Endothelial cell of umbilical vein (primary cell): ENCODE measurements at regions of chr1 and their contacts with region 1.

Region 1: DNA sequence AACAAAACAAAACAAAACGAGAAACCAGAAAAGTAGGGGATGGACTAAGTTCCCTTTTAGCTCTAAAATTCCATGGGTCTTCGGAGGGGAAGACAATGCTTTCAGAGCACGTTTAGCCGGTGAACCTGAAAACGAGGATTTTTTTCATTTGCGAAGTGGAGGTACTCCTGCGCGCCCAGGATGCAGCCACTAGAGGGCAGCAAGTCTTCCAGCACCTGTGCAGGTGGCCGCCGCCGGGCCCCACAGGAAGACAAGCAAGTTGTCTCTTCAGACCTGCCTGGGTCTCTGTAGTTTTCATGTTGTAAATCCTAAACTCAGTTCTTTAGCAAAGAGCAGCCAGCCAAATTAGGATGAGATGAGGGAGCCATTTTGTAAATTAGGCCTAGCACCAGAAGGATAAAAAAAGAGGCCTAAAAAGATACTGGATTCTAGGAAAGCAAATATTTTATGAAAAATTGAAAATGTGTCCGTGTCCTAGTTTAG is 17.7 kb upstream of the SNX27 start:
- DNase-seq: peak; percentile 51
- H3K4me3 ChIP-seq: no peak overlapping the region
- H3K27ac ChIP-seq: no peak overlapping the region
- H3K4me1 ChIP-seq: no peaks in the 10 kb centered on the region
- H3K27me3 ChIP-seq: no peaks in the 10 kb centered on the region
- CTCF ChIP-seq: peak; percentile 94 to 95
- POLR2A ChIP-seq: no peak

Region 2: DNA sequence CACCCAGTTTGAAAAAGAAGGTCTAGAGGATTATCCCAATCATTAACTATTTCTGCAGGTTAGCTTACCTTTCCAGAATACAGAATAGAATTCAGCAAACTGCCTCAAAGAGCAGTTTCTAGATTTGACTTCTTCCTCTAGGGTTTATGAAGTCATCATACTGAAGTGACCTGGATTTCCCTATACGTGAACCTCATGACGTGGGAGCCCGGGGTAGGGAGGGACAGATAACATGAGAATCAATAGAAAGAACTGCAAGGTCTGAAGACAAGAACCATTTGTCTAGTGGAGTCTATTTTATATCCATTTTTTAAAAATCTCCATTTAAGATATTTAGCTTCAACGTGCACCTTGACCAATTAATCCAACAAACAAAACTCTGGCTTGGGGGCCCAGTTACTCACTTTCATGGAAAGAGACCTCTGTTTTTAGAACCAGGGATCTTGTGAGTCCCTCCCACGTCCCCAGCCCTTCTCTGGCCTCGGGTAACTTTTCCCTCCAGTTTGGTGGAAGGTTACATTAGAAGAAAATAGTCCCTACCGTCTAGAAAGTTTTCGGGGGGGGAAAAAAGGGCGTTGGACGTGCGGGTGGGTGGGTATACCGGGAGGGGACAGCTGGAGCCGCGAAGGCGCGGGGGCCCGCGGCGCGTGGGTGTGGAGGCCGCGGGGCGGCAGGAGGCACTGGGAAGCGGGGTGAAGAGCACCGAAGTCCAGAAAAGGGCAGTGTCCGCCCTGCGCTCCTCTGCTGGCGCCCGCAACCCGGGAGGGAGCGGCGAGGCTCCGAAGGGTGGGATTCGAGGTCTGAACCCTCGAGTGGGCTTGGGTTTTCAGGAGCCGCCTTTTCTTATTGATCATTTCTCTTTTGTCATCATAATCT is 121.1 kb before region 1 on chr1:
- CTCF ChIA-PET with region 1: no interaction called
- POLR2A ChIA-PET with region 1: interaction called, 3 read pairs
- dilution Hi-C with region 1: no loop called
- intact Hi-C with region 1: loop called (anchors 5 kb)
- DNase-seq: peak; percentile 52
- H3K4me3 ChIP-seq: peak overlapping the region; percentile 40 to 64 (median 41)
- H3K27ac ChIP-seq: no peak overlapping the region
- H3K4me1 ChIP-seq: peaks cover 2% of the 10 kb centered on the region
- H3K27me3 ChIP-seq: no peaks in the 10 kb centered on the region
- CTCF ChIP-seq: no peak
- POLR2A ChIP-seq: peak; percentile 39

Region 3: GRCh38 chr1:151485685-151486255 is 108.4 kb before region 1 on chr1:
- CTCF ChIA-PET with region 1: no interaction called
- POLR2A ChIA-PET with region 1: no interaction called
- dilution Hi-C with region 1: no loop called
- intact Hi-C with region 1: no loop called
- DNase-seq: no peak
- H3K4me3 ChIP-seq: no peak overlapping the region
- H3K27ac ChIP-seq: no peak overlapping the region
- H3K4me1 ChIP-seq: no peaks in the 10 kb centered on the region
- H3K27me3 ChIP-seq: no peaks in the 10 kb centered on the region
- CTCF ChIP-seq: no peak
- POLR2A ChIP-seq: no peak

Region 4: DNA sequence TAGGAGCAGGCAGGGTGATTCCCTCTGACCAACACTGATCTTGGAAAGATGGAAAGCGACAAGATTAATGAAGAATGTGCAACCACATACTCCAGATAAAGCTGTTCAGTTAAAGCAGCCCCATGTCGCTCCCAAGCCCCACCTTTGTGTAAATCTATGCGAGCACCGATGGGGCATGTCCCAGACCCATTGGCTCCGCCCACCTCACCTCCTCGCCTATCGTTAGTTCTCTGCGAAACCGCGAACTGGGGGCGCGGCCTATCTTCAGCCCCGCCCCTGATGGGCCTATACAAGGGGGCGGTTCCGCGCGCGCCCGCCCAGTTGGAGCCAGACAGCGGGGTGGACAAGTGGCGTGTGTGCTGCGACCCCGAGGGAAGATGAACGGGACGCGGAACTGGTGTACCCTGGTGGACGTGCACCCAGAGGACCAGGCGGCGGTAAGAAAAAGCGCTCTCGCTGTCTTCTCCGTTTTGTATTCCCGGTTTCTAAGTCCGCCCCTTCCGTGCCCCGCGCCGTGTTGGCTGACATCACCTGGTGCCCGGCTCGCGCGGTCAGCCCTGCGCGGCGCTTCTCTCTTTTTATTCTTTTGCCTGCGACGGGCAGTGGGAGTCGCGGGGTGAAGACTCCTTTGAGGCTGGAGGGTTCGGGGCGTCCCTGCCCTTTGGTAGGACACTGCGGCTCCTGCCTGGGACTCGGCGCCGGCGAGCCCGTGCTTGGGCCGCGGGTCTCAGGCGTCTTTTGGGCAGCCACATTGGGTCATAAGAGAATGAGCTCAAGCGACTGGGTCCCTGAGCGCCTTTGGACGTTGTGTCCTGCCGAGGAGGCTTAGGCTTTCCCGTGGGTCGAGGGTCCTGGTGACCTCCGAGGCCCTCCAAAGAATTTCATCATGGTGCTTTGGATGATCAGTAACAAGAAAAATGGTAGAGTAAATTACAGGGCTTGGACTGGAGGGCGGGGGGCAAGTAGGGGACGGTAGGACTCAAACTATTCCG is 53.9 kb before region 1 on chr1 and contains the start of gene TUFT1:
- CTCF ChIA-PET with region 1: interaction called, 3 read pairs
- POLR2A ChIA-PET with region 1: no interaction called
- dilution Hi-C with region 1: no loop called
- intact Hi-C with region 1: loop called (anchors 5 kb)
- DNase-seq: peak; percentile 92
- H3K4me3 ChIP-seq: peak within 1 kb of the TSS; percentile 76 to 81 (median 78)
- H3K27ac ChIP-seq: peak within 1 kb of the TSS; percentile 33
- H3K4me1 ChIP-seq: peaks cover 11% of the 10 kb centered on the region
- H3K27me3 ChIP-seq: no peaks in the 10 kb centered on the region
- CTCF ChIP-seq: no peak
- POLR2A ChIP-seq: peak; percentile 97
- total RNA-seq, gene TUFT1: 4.3 TPM in 2 replicates

Region 5: DNA sequence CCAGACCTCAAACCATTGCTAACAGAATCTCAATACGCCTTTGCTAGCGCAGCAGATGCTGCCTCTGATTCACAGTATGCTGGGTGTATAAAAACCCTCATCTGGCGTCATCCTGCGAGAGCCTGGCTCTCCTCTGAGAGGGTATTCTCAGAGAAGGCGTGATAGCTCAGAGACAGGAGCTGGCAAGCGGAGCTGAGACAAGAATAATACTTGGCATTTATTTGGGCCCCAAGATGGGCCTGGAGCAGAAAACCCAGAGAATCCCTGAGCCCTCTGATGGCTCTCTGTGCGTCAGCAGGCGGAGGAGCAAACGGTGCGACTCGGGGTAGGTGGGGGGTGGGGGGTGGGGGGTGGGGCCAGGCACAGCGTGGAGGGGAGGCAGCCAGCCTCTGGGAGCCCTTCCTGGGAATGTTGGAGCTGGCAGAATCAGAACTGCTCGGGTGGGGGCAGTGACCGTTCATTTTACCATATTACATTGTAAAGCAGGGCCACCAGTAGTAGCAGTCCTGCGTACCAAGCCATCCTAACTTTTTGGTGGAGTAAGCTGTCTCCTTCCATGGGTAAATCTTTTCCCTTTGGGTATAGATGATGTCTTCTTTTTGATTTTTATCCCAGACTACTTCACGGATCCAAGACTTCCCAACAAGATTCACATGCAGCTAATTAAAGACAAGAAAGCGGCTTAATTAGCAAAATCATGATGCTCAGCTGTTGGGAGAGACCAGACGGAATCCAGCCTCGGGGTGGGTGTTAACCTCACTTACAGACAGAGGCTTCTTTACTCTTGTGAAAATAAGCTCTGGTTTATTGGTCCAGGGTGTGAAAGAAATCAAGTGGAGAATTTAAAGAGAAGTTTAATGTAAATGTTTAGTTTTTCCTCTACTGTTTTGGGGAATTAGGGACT is 134.2 kb after region 1 on chr1:
- CTCF ChIA-PET with region 1: interaction called, 13 read pairs
- POLR2A ChIA-PET with region 1: no interaction called
- dilution Hi-C with region 1: no loop called
- intact Hi-C with region 1: no loop called
- DNase-seq: no peak
- H3K4me3 ChIP-seq: no peak overlapping the region
- H3K27ac ChIP-seq: no peak overlapping the region
- H3K4me1 ChIP-seq: no peaks in the 10 kb centered on the region
- H3K27me3 ChIP-seq: peaks cover 26 to 28% of the 10 kb centered on the region in 2 experiments
- CTCF ChIP-seq: no peak
- POLR2A ChIP-seq: no peak

Region 6: GRCh38 chr1:151739590-151740375 is 145.6 kb after region 1 on chr1:
- CTCF ChIA-PET with region 1: interaction called, 13 read pairs
- POLR2A ChIA-PET with region 1: no interaction called
- dilution Hi-C with region 1: no loop called
- intact Hi-C with region 1: loop called (anchors 1 kb)
- DNase-seq: no peak
- H3K4me3 ChIP-seq: no peak overlapping the region
- H3K27ac ChIP-seq: no peak overlapping the region
- H3K4me1 ChIP-seq: no peaks in the 10 kb centered on the region
- H3K27me3 ChIP-seq: peaks cover 18 to 29% of the 10 kb centered on the region in 2 experiments
- CTCF ChIP-seq: no peak
- POLR2A ChIP-seq: no peak